Activated T-helper 1 cell treated with anti-CD3 and anti-CD28 coated beads, Interleukin-12 subunit alpha, Interleukin-12 subunit beta, Interleukin-2, Interleukin-4 antibody, amounts not matched to agents 30 ng/mL and 10 ng/mL and 1 ng/mL, durations not matched to agents 14 hours and 24 hours and 36 hours (primary cell): ENCODE measurements at regions of chr2 and their contacts with region 1.

Region 1: DNA sequence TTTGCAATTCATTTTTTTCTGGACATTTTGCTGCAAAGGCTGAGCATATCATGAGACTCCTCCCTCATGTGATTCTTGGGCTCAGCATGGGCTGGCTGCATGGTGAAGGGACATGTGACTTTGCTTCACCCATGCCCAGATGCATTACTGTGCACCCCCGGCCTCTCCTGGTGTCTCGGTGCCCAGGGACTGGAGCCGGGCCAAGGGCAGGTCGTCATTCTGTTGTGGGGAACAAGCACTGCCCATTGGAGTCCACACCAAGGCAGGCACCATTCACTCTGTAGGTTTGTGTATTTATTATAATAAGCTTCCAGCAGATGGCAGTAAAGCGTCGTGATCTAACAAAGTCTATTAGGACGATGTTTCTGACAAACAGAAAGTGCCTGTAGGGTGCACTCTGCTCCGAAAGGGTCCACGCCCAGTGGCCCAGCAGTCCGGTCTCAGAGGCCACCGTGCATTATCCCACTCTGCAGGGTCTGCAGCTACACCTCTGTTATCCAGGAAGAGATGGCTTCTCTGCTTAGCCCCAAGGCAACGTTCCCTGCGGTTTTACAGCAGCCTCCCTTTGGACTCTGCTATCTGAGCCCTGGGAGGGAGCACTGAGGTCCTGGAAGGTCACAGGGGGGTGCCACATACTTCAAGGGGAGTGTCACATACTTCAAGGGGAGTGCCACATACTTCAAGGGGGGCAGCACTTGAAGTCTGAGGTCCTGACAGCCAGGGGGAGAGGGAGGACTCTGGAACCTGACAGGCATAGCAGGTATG is 219.6 kb downstream of the TSN start:
- DNase-seq: peak; percentile 25
- H3K4me3 Mint-ChIP-seq: peak overlapping the region; percentile 38
- H3K27ac Mint-ChIP-seq: no peak overlapping the region
- H3K4me1 Mint-ChIP-seq: peaks cover 9% of the 10 kb centered on the region
- H3K27me3 Mint-ChIP-seq: peaks cover 2% of the 10 kb centered on the region

Region 2: GRCh38 chr2:121828281-121828731 is 146.8 kb before region 1 on chr2:
- intact Hi-C with region 1: no loop called
- DNase-seq: no peak
- H3K4me3 Mint-ChIP-seq: no peak overlapping the region
- H3K27ac Mint-ChIP-seq: no peak overlapping the region
- H3K4me1 Mint-ChIP-seq: no peaks in the 10 kb centered on the region
- H3K27me3 Mint-ChIP-seq: peaks cover 2% of the 10 kb centered on the region

Region 3: GRCh38 chr2:121839584-121839983 is 135.5 kb before region 1 on chr2:
- intact Hi-C with region 1: no loop called
- DNase-seq: no peak
- H3K4me3 Mint-ChIP-seq: no peak overlapping the region
- H3K27ac Mint-ChIP-seq: no peak overlapping the region
- H3K4me1 Mint-ChIP-seq: no peaks in the 10 kb centered on the region
- H3K27me3 Mint-ChIP-seq: peaks cover 3% of the 10 kb centered on the region

Region 4: GRCh38 chr2:122300758-122301157 is 325.7 kb after region 1 on chr2:
- intact Hi-C with region 1: loop called (anchors 1 kb)
- DNase-seq: no peak
- H3K4me3 Mint-ChIP-seq: no peak overlapping the region
- H3K27ac Mint-ChIP-seq: no peak overlapping the region
- H3K4me1 Mint-ChIP-seq: no peaks in the 10 kb centered on the region
- H3K27me3 Mint-ChIP-seq: no peaks in the 10 kb centered on the region